Breast epithelium (tissue), 4 donors: ENCODE measurements at regions of chr6 and their contacts with region 1.

Region 1: DNA sequence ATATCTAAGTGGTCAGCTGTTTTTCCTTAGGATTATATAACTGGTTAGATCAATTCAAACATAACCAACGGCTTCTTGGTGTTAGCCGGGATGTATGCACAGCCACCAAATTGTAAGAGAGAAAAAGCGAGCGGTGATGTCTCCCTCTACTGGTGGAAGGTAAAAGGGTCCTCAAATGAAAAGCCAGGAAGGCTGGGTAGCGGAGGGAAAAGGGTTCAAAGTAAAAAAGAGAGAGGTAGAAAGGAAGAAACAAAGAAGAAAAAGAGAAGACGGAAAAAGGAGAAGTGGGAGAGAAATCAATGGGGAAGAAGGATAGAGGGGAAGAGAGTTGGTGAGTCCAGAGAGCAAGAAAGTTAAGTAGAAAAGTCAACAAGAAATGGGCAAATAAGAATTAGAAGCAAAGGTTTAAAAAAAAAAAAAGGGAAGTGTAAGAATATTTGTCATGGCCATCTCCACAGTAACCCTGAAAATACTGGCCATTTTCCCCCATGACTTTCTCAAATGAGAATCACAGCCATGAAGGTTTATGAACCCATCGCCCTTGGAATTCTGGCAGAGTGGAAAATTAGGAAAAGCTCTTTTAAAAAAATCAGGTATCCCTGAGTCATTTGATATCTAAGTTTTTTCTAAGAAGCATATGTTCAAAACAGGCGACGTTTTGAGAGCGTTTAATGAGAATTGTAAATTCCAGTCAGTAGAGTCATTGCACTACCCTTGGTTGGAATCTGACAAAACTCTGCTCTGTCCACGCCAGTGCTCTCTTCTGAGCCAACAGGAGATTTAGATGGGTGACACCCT is 155.6 kb upstream of the SNX9 start:
- DNase-seq: peak in 1 of 2 donors; percentile 28
- H3K4me3 ChIP-seq: no peak overlapping the region
- H3K27ac ChIP-seq: no peak overlapping the region
- H3K4me1 ChIP-seq: peaks cover 3 to 5% of the 10 kb centered on the region in 2 donors
- H3K27me3 ChIP-seq: no peaks in the 10 kb centered on the region
- CTCF ChIP-seq: peak; percentile 84 to 94 (median 90)
- POLR2A ChIP-seq: no peak

Region 2: GRCh38 chr6:157620566-157621343 is 46.7 kb before region 1 on chr6:
- intact Hi-C with region 1: no loop called
- DNase-seq: no peak
- H3K4me3 ChIP-seq: no peak overlapping the region
- H3K27ac ChIP-seq: no peak overlapping the region
- H3K4me1 ChIP-seq: no peaks in the 10 kb centered on the region
- H3K27me3 ChIP-seq: no peaks in the 10 kb centered on the region
- CTCF ChIP-seq: no peak
- POLR2A ChIP-seq: no peak

Region 3: GRCh38 chr6:157632821-157633220 is 34.6 kb before region 1 on chr6:
- intact Hi-C with region 1: no loop called
- DNase-seq: no peak
- H3K4me3 ChIP-seq: no peak overlapping the region
- H3K27ac ChIP-seq: no peak overlapping the region
- H3K4me1 ChIP-seq: no peaks in the 10 kb centered on the region
- H3K27me3 ChIP-seq: no peaks in the 10 kb centered on the region
- CTCF ChIP-seq: no peak
- POLR2A ChIP-seq: no peak

Region 4: GRCh38 chr6:158303210-158303731 is 635.9 kb after region 1 on chr6:
- intact Hi-C with region 1: loop called (anchors 5 kb)
- DNase-seq: no peak
- H3K4me3 ChIP-seq: no peak overlapping the region
- H3K27ac ChIP-seq: no peak overlapping the region
- H3K4me1 ChIP-seq: no peaks in the 10 kb centered on the region
- H3K27me3 ChIP-seq: no peaks in the 10 kb centered on the region
- CTCF ChIP-seq: no peak
- POLR2A ChIP-seq: no peak